Natural killer cell (primary cell): ENCODE measurements at regions of chr1 and their contacts with region 1.

Region 1: DNA sequence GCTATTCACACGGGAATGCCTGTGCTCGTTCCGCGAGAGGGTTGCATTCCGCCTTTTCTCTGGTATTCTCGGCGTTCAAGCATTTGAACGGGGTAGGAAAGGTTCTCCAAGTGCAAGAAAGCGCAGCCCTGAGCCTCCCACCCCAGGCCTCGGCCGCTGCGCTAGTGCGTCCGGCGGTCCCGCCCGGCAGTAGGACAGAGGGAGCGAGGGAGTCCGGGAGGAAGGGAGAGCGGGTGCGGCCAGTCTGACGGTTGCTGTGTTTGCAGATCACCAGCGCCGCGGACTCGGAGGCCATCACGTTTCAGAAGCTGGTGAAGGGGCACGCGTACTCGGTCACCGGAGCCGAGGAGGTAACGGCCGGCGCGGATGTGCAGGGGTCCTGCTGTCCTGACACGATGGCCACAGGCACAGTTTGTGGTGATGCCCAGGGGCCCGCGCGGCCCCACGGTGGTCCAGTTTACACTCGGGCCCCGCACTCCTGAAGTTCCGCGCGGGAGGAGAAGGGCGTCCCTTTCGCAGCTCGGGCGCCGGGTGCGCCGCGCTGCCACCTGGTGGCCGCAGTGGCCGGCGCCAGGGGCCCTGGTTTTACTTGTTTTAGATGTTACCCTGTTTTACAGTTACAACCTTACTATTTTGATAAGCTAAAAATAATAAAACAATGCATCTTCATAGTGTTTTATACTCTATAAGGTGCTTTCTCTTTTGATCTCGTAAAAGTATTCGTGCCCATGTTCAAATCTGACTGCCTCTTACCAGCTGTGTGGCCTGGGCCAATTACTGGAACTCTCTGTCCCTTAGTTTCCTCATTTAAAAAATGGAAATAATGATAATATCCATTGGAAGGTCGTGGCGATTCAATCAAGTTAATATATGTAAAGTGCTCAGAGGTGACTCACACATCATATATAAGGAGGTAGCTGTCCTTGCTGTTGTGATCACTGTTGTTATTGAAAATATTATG is 36.7 kb downstream of the CAPN2 start:
- DNase-seq: peak; percentile 70 to 84
- ATAC-seq: peak; percentile 82 to 96 (median 90)
- H3K4me3 ChIP-seq: peak overlapping the region; percentile 37
- H3K4me3 Mint-ChIP-seq: peak overlapping the region; percentile 82
- H3K27ac ChIP-seq: no peak overlapping the region
- H3K27ac Mint-ChIP-seq: peak overlapping the region; percentile 10 to 72
- H3K4me1 ChIP-seq: peaks cover 12% of the 10 kb centered on the region
- H3K4me1 Mint-ChIP-seq: peaks cover 12 to 22% of the 10 kb centered on the region in 2 donors
- H3K27me3 ChIP-seq: no peaks in the 10 kb centered on the region
- H3K27me3 Mint-ChIP-seq: no peaks in the 10 kb centered on the region
- CTCF ChIP-seq: peak; percentile 93

Region 2: GRCh38 chr1:223700942-223701637 is 48.0 kb before region 1 on chr1:
- intact Hi-C with region 1: loop called (anchors 1 kb)
- DNase-seq: no peak
- ATAC-seq: no peak
- H3K4me3 ChIP-seq: no peak overlapping the region
- H3K4me3 Mint-ChIP-seq: no peak overlapping the region
- H3K27ac ChIP-seq: no peak overlapping the region
- H3K27ac Mint-ChIP-seq: no peak overlapping the region
- H3K4me1 ChIP-seq: peaks cover 4% of the 10 kb centered on the region
- H3K4me1 Mint-ChIP-seq: peaks cover 17 to 23% of the 10 kb centered on the region in 2 donors
- H3K27me3 ChIP-seq: no peaks in the 10 kb centered on the region
- H3K27me3 Mint-ChIP-seq: no peaks in the 10 kb centered on the region
- CTCF ChIP-seq: no peak

Region 3: DNA sequence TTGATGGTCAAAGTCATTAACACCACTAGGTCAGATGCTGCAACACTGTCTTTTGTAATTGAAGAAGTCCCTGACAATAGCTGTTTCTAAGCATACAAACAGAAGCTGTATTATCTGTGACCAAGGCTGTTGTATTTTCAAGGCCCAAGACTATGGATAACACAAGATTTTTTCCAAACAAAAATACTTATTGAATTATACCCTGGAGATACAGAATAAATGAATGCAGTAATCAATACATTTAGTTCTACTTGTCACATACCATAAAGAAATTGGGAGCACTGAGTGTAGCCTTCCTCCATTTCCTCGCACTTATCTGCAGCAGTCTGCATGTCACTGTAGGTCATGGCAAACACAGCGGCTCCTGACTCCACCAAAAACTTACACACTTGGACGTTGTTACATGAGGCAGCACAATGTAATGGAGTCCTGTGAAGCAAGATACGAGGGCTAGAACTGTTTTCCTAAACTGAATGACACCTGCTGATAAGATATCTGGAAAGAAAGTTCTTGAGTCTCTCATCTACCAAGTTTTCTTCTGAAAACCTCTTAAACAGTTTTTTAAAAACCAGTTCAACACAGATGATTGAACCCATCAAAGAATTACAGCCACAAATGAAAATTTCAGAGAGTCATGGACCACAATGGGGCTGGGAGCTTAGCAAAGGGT is 39.8 kb after region 1 on chr1:
- intact Hi-C with region 1: no loop called
- DNase-seq: no peak
- ATAC-seq: no peak
- H3K4me3 ChIP-seq: no peak overlapping the region
- H3K4me3 Mint-ChIP-seq: no peak overlapping the region
- H3K27ac ChIP-seq: no peak overlapping the region
- H3K27ac Mint-ChIP-seq: no peak overlapping the region
- H3K4me1 ChIP-seq: no peaks in the 10 kb centered on the region
- H3K4me1 Mint-ChIP-seq: no peaks in the 10 kb centered on the region
- H3K27me3 ChIP-seq: no peaks in the 10 kb centered on the region
- H3K27me3 Mint-ChIP-seq: no peaks in the 10 kb centered on the region
- CTCF ChIP-seq: no peak